ENCODE measurements at regions of chr14 and their contacts with region 1.

Region 1: DNA sequence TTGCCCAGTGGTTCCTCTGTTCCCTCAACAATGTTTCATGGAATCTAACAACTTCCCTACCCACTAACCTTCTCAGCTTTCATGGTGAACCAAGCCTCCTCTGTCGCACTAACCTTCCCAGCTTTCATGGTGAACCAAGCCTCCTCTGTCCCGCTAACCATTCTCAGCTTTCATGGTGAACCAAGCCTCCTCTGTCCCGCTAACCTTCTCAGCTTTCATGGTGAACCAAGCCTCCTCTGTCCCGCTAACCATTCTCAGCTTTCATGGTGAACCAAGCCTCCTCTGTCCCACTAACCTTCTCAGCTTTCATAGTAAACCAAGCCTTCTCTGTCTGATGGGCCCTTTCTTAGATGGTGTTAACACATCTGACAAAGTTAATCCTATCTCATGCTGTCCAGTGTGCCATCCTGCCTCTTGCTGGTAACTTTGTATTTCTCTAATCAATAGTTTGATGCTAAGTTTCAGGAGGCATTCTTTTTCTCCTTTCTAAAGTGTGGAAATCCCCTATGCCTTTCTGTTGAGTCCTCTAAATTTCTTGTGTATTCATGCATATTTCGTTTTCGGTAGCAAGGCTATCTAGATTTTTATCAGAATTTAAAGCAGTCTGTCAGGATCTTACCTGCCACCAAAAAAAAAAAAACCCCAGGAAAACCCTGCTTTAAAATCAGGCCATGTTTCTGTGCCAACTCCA is 26.8 kb upstream of the KCNK13 start:
- DNase-seq: no peak
- H3K4me3 ChIP-seq: no peak overlapping the region
- H3K27ac ChIP-seq: no peak overlapping the region
- H3K4me1 ChIP-seq: no peaks in the 10 kb centered on the region
- CTCF ChIP-seq: no peak

Region 2: GRCh38 chr14:89519040-89519439 is 515.9 kb before region 1 on chr14:
- CTCF ChIA-PET with region 1: no interaction called
- POLR2A ChIA-PET with region 1: no interaction called
- intact Hi-C with region 1: no loop called
- DNase-seq: no peak
- H3K4me3 ChIP-seq: no peak overlapping the region
- H3K27ac ChIP-seq: no peak overlapping the region
- H3K4me1 ChIP-seq: no peaks in the 10 kb centered on the region
- CTCF ChIP-seq: no peak

Region 3: DNA sequence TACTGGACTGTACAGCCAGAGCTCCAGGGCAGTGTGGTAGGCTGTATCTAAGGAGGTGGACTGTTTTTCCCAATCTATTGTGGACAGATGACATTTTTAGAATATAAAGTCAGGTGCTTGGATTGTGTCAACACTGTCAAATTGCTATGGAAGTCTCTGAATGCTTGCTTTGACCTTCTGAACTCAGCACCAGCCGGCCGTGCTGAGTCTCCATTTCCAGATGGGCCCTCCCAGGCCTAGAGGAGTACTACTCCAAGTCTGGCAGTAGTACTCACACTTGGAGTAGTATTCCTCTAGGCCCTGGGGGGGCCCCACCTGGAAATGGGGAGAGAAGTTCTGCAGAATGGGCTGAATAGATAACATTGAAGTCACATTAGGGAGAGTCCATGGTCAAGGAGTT is 10.6 kb after region 1 on chr14:
- CTCF ChIA-PET with region 1: no interaction called
- POLR2A ChIA-PET with region 1: interaction called, 13 read pairs
- intact Hi-C with region 1: no loop called
- DNase-seq: no peak
- H3K4me3 ChIP-seq: no peak overlapping the region
- H3K27ac ChIP-seq: no peak overlapping the region
- H3K4me1 ChIP-seq: no peaks in the 10 kb centered on the region
- CTCF ChIP-seq: no peak